ENCODE measurements at regions of chr12 and their contacts with region 1.

Region 1: GRCh38 chr12:119894916-119895315 is 17.8 kb upstream of the CIT start:
- DNase-seq: no peak
- ATAC-seq: no peak
- H3K4me3 ChIP-seq: no peak overlapping the region
- H3K27ac ChIP-seq: no peak overlapping the region
- H3K4me1 ChIP-seq: no peaks in the 10 kb centered on the region
- H3K27me3 ChIP-seq: no peaks in the 10 kb centered on the region
- CTCF ChIP-seq: no peak
- POLR2A ChIP-seq: no peak
- RAD21 ChIP-seq: no peak

Region 2: DNA sequence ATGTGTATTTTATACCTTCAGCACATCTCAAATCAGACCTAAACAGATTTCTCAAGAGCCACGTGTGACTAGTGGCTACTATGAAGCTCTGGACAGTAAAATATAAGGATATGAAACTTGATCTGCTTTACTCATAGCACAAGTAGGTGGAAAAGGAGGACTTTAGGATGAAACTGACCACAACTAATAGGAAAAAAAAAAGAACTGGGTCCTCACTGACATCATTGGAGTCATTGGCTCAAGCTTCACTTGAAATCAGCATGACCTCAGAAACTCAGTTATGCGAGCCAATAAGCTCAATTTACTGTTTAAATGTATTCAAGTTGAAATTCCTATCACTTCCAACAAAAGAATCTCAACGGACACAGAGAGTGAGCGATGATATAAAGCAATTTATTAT is 16.3 kb after region 1 on chr12:
- CTCF ChIA-PET with region 1: no interaction called
- POLR2A ChIA-PET with region 1: interaction called, 23 read pairs
- dilution Hi-C with region 1: no loop called
- in situ Hi-C with region 1: no loop called
- intact Hi-C with region 1: no loop called
- DNase-seq: peak; percentile 95
- ATAC-seq: peak; percentile 72
- H3K4me3 ChIP-seq: no peak overlapping the region
- H3K27ac ChIP-seq: no peak overlapping the region
- H3K4me1 ChIP-seq: no peaks in the 10 kb centered on the region
- H3K27me3 ChIP-seq: peaks cover 2% of the 10 kb centered on the region; the same call in 1 of the 2 replicates
- CTCF ChIP-seq: no peak
- POLR2A ChIP-seq: no peak
- RAD21 ChIP-seq: no peak

Region 3: DNA sequence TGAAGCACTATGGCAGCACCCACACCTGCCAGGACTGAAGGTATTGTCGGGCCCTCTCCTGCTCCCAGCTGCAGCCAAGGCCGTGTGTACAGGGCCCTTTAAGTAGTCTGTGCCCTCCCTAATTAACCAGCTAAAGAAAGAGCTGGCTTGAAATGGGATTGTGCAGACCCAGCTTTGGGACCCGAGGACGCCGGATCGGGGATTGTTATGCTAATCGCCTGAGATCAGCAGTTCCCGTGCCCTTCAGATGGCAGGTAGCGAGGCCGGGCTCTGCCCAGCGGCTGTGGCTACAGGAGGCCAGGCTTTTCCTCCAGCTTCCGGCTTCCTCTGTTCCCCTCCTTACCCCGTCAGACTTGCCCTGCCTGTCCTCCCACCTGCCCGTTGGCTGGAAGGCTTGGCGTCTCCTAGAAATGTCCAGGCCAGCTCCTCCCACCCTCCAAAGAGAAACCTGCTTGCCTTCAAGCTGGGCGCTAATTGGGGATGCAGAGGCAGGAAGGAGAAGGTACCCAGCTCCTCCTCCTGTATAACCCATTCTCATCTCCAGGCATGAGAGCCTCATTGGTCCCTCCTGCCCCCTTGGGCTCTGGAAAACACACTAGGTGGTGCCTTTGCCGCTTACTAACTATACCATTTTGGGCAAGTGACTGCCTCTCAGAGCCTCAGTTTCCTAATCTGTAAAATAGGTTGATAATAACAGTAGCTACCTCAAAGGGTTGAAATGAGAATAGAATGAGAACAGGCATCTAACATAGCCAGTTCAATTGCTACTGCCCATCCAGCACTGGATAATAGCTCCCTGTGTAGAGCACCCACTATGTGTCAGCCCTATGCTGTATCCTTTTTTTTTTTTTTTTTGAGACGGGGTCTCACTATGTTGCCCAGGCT is 499.8 kb after region 1 on chr12:
- CTCF ChIA-PET with region 1: no interaction called
- POLR2A ChIA-PET with region 1: no interaction called
- dilution Hi-C with region 1: no loop called
- in situ Hi-C with region 1: no loop called
- intact Hi-C with region 1: no loop called
- DNase-seq: no peak
- ATAC-seq: no peak
- H3K4me3 ChIP-seq: no peak overlapping the region
- H3K27ac ChIP-seq: no peak overlapping the region
- H3K4me1 ChIP-seq: no peaks in the 10 kb centered on the region
- H3K27me3 ChIP-seq: peaks cover 38% of the 10 kb centered on the region
- CTCF ChIP-seq: no peak
- POLR2A ChIP-seq: no peak
- RAD21 ChIP-seq: no peak

Region 4: DNA sequence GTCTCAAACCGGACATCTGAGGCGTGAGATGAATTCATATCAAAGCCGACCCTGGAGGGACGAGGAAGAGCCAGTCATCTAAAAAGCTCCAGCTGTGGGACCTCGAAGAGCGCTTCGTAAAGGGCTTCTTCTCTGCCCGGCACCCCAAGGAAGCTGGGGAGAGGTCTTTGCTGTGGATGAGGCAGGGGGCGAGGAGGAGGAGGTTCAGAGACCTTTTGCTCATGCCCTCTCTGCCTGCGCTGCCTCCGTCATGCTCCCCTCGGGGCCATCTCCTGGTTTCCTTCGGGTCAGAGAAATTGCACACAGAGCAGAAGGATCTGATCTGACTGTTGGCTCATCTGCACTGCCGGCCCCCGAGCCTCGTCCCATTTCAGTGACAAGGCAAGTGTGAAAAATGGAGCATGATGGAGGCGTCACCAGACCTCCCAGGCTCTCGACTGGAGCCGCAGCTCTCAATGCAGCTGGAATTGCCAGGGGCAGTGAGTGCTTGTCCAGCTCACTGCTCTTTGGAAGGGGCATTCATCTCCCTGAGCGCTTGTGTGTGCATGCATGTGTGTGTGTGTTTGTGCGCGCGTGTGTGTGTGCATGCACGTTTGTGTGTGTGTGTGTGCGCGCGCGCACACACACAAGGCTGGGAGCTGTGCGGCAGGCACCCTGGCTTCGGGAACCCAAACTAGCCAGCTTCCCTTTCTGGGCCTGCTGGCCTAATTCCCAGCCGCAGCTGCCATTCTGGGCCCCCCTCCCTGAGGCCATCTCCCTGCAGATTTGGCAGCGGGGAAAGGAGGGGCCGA is 754.7 kb after region 1 on chr12:
- CTCF ChIA-PET with region 1: no interaction called
- POLR2A ChIA-PET with region 1: no interaction called
- dilution Hi-C with region 1: no loop called
- in situ Hi-C with region 1: no loop called
- intact Hi-C with region 1: no loop called
- DNase-seq: peak; percentile 5
- ATAC-seq: no peak
- H3K4me3 ChIP-seq: peak overlapping the region; percentile 14; the same call in 1 of the 2 replicates
- H3K27ac ChIP-seq: no peak overlapping the region
- H3K4me1 ChIP-seq: peaks cover 3% of the 10 kb centered on the region; the same call in 1 of the 2 replicates
- H3K27me3 ChIP-seq: peaks cover 54% of the 10 kb centered on the region
- CTCF ChIP-seq: no peak
- POLR2A ChIP-seq: no peak
- RAD21 ChIP-seq: no peak

Measured in IMR-90 (cell line).